PC-9 (cell line): ENCODE measurements at regions of chr10 and their contacts with region 1.

Region 1: GRCh38 chr10:79184145-79184625 is 115.4 kb downstream of the ZMIZ1 start:
- DNase-seq: peak; percentile 91 to 96
- H3K4me3 ChIP-seq: no peak overlapping the region
- H3K27ac ChIP-seq: peak overlapping the region; percentile 54
- H3K4me1 ChIP-seq: peaks cover 44% of the 10 kb centered on the region
- H3K27me3 ChIP-seq: no peaks in the 10 kb centered on the region
- CTCF ChIP-seq: no peak

Region 2: GRCh38 chr10:79162861-79163665 is 21.1 kb before region 1 on chr10:
- CTCF ChIA-PET with region 1: no interaction called
- POLR2A ChIA-PET with region 1: no interaction called
- intact Hi-C with region 1: loop called (anchors 1 kb)
- DNase-seq: peak; percentile 86 to 88
- H3K4me3 ChIP-seq: no peak overlapping the region
- H3K27ac ChIP-seq: peak overlapping the region; percentile 39; the same call in 1 of the 2 replicates
- H3K4me1 ChIP-seq: peaks cover 24% of the 10 kb centered on the region
- H3K27me3 ChIP-seq: no peaks in the 10 kb centered on the region
- CTCF ChIP-seq: no peak

Region 3: GRCh38 chr10:79367426-79368189 is 183.4 kb after region 1 on chr10:
- CTCF ChIA-PET with region 1: no interaction called
- POLR2A ChIA-PET with region 1: interaction called, 12 read pairs
- intact Hi-C with region 1: no loop called
- DNase-seq: no peak
- H3K4me3 ChIP-seq: no peak overlapping the region
- H3K27ac ChIP-seq: no peak overlapping the region
- H3K4me1 ChIP-seq: no peaks in the 10 kb centered on the region
- H3K27me3 ChIP-seq: no peaks in the 10 kb centered on the region
- CTCF ChIP-seq: no peak